H1 (cell line): ENCODE measurements at regions of chr16 and their contacts with region 1.

Region 1: DNA sequence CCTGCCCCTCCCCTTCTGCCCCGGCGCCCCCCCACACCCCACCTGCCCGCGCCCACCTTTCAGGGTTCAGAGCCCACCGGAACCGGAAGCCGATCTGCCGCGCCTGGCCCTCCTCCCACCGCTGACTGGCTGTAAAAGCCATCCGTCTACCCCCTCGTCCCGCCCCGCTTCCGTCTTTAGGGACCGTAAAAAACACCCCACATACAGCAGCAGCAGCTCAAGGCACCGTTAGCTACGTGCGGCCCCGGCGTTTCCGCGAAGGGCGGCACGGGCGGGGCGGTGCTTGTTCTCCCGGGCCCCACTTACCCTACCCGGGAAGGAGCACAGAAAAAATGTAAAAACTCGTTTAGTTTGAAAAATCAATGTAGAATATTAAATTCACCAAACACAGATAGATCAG is at the start of gene MRPL28:
- DNase-seq: peak; percentile 89 to 97
- H3K4me3 ChIP-seq: peak within 1 kb of the TSS; percentile 23 to 60 (median 49); a peak in 7 of 8 replicates
- H3K27ac ChIP-seq: no peak within 1 kb of the TSS
- H3K4me1 ChIP-seq: peaks cover 0 to 10% (median 9%) of the 10 kb centered on the region in 4 experiments; a peak in 5 of 7 replicates
- H3K27me3 ChIP-seq: no peaks in the 10 kb centered on the region
- CTCF ChIP-seq: no peak
- EP300 ChIP-seq: no peak
- POLR2A ChIP-seq: no peak
- RAD21 ChIP-seq: no peak
- total RNA-seq, gene MRPL28: 88.9 and 95.7 TPM in 2 replicates

Region 2: GRCh38 chr16:203246-203645 is 167.2 kb before region 1 on chr16:
- CTCF ChIA-PET with region 1: no interaction called
- POLR2A ChIA-PET with region 1: no interaction called
- DNase-seq: no peak
- H3K4me3 ChIP-seq: no peak overlapping the region
- H3K27ac ChIP-seq: no peak overlapping the region
- H3K4me1 ChIP-seq: no peaks in the 10 kb centered on the region
- H3K27me3 ChIP-seq: no peaks in the 10 kb centered on the region
- CTCF ChIP-seq: no peak
- EP300 ChIP-seq: no peak
- POLR2A ChIP-seq: no peak
- RAD21 ChIP-seq: no peak

Region 3: GRCh38 chr16:381789-382717 is 11.6 kb after region 1 on chr16 and contains the start of gene PGAP6:
- CTCF ChIA-PET with region 1: no interaction called
- POLR2A ChIA-PET with region 1: interaction called, 11 read pairs
- DNase-seq: peak in 1 of 2 experiments; percentile 70
- H3K4me3 ChIP-seq: peak within 1 kb of the TSS; percentile 59 to 99 (median 82)
- H3K27ac ChIP-seq: peak within 1 kb of the TSS; percentile 37; the same call in 1 of the 2 replicates
- H3K4me1 ChIP-seq: peaks cover 8 to 28% (median 19%) of the 10 kb centered on the region in 4 experiments
- H3K27me3 ChIP-seq: peaks cover 0 to 3% (median under 1%) of the 10 kb centered on the region in 4 experiments; a peak in 2 of 7 replicates
- CTCF ChIP-seq: no peak
- EP300 ChIP-seq: no peak
- POLR2A ChIP-seq: no peak
- RAD21 ChIP-seq: no peak
- total RNA-seq, gene PGAP6: 86.8 and 92.9 TPM in 2 replicates